ENCODE measurements at regions of chr3 and their contacts with region 1.

Region 1: GRCh38 chr3:151146071-151146730 is 56.8 kb downstream of the GPR171 start:
- DNase-seq: peak; percentile 86

Region 2: GRCh38 chr3:150721285-150722130 is 424.7 kb before region 1 on chr3:
- intact Hi-C with region 1: loop called (anchors 2 kb)
- DNase-seq: no peak

Region 3: GRCh38 chr3:150787741-150788370 is 358.3 kb before region 1 on chr3:
- intact Hi-C with region 1: loop called (anchors 2 kb)
- DNase-seq: peak; percentile 93

Region 4: DNA sequence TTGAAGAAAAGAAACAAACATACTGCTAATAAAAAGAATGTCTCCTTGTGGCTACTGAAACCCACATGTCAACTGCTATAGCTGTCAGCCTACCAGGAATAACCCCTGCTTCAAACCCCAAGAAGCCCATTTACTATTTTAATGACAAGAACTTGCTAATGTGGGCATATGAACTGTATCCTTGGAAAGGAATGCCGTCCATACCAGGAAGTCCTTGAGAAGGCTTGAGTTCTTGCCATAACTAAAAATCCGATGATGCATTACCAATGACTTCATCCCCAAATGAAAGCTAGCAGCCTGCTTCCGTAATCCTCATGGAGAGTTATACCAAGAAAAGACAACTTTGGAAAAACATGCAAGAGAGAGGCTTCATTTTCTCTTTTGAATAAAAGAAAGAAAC is 275.8 kb before region 1 on chr3:
- intact Hi-C with region 1: loop called (anchors 5 kb)
- DNase-seq: no peak

Region 5: DNA sequence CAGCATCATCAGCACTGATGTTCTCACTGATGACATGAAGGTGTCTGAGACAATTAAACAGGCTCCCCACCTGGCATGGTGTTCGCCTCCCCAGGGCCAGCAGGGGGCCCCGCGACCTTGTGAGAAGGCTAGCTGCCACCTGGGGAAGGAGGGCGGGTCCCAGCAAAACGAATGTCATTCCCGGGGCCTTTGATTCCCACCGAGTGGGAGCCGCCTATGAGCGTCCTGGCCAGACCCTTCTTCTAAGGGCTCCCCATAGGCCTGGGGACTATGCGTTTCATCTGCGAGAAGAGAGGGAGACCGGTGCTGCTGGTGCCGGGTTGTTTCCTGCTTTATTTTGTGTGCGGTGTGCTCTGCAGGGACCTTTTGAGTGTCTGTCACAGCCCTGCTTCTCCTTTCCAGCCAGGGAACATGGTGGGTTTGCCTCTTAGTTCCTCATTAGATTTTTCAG is 220.4 kb before region 1 on chr3:
- intact Hi-C with region 1: loop called (anchors 1 kb)
- DNase-seq: peak; percentile 80

Region 6: DNA sequence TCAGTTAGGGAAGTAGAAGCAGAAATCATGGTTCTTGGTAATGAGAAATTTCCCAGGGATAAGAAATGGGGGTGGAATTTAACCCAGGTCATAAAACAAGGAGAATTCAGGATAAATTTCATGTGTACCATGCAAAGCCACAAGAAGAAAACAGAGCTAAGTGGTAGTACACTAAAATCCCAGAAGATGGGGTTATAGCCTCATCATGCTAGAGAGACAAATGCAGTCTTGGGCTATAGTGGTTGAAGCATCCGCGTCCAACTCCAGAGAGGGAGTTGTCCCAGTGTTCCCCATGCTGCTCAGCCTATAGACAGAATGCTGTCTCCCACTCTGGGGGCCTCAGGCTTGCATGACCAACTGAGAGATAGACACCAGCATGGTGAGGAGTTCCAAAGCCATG is 137.5 kb before region 1 on chr3:
- intact Hi-C with region 1: loop called (anchors 1 kb)
- DNase-seq: no peak

Region 7: GRCh38 chr3:151086484-151087456 is 59.4 kb before region 1 on chr3:
- intact Hi-C with region 1: loop called (anchors 5 kb)
- DNase-seq: peak; percentile 91

Region 8: GRCh38 chr3:151282921-151283320 is 136.7 kb after region 1 on chr3:
- intact Hi-C with region 1: no loop called
- DNase-seq: no peak

Measured in cardiac septum (tissue), 1 donor.